A673 (cell line): ENCODE measurements at regions of chr6 and their contacts with region 1.

Region 1: GRCh38 chr6:154928325-154928922 is 66.7 kb upstream of the TIAM2 start:
- DNase-seq: peak; percentile 82
- H3K4me3 ChIP-seq: no peak overlapping the region
- H3K27ac ChIP-seq: no peak overlapping the region
- H3K4me1 ChIP-seq: peaks cover 29% of the 10 kb centered on the region
- H3K27me3 ChIP-seq: no peaks in the 10 kb centered on the region
- CTCF ChIP-seq: peak; percentile 87

Region 2: GRCh38 chr6:154675602-154676088 is 252.8 kb before region 1 on chr6:
- CTCF ChIA-PET with region 1: no interaction called
- POLR2A ChIA-PET with region 1: no interaction called
- intact Hi-C with region 1: loop called (anchors 5 kb)
- DNase-seq: peak; percentile 96
- H3K4me3 ChIP-seq: no peak overlapping the region
- H3K27ac ChIP-seq: no peak overlapping the region
- H3K4me1 ChIP-seq: no peaks in the 10 kb centered on the region
- H3K27me3 ChIP-seq: no peaks in the 10 kb centered on the region
- CTCF ChIP-seq: peak; percentile 100

Region 3: DNA sequence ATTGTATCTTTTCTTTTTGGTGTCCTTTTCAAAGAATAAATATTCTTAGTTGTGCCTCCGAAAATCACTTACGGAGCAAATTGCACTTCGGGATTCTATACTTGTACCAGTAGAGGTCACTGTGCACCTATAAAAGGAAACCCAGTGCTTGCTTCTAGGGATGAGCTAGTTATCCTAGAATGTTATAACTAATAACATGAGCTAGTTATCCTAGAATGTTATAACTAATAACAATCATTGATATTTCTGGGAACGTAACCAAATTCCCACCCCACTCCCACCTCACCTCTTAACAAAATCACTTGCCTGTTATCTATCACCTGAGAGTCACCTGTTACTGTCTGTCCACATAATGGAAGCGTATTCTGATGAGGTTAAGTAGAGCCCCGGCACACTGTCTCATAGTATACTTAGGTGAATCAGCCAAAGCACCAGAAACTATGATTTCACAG is 60.3 kb before region 1 on chr6:
- CTCF ChIA-PET with region 1: interaction called, 5 read pairs
- POLR2A ChIA-PET with region 1: no interaction called
- intact Hi-C with region 1: loop called (anchors 2 kb)
- DNase-seq: peak; percentile 77
- H3K4me3 ChIP-seq: no peak overlapping the region
- H3K27ac ChIP-seq: no peak overlapping the region
- H3K4me1 ChIP-seq: no peaks in the 10 kb centered on the region
- H3K27me3 ChIP-seq: no peaks in the 10 kb centered on the region
- CTCF ChIP-seq: peak; percentile 81

Region 4: DNA sequence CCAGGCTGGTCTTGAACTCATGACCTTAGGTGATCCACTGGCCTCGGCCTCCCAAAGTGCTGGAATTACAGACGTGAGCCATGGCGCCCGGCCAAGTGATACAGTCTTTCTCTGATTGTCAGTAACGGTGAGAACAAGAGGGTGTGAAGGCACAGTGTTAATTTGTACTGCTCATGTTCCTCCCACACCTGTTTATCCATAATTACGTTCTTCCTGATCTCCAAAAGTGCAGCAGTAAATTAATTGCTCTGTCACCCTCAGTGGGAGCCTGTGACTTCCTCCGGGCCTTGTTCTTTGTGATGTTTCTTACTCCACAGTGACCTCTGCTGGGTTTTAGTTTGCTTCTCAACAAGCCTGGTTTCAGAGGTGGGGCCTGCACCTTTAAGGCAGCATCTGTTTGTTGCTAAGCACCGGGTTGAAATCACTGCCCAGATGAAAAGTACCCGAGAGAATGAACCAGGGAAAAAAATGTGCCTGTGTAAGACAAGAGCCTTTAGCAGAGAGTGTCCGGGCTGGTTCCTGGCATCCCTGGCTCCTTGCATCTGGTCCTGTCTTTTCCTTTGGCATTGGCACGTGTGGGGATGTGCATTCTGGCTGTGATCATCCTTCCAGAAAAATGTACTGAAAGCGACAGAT is 246.3 kb after region 1 on chr6:
- CTCF ChIA-PET with region 1: interaction called, 4 read pairs
- POLR2A ChIA-PET with region 1: interaction called, 12 read pairs
- intact Hi-C with region 1: loop called (anchors 1 kb)
- DNase-seq: peak; percentile 90
- H3K4me3 ChIP-seq: no peak overlapping the region
- H3K27ac ChIP-seq: no peak overlapping the region
- H3K4me1 ChIP-seq: peaks cover 25% of the 10 kb centered on the region
- H3K27me3 ChIP-seq: no peaks in the 10 kb centered on the region
- CTCF ChIP-seq: peak; percentile 72

Region 5: DNA sequence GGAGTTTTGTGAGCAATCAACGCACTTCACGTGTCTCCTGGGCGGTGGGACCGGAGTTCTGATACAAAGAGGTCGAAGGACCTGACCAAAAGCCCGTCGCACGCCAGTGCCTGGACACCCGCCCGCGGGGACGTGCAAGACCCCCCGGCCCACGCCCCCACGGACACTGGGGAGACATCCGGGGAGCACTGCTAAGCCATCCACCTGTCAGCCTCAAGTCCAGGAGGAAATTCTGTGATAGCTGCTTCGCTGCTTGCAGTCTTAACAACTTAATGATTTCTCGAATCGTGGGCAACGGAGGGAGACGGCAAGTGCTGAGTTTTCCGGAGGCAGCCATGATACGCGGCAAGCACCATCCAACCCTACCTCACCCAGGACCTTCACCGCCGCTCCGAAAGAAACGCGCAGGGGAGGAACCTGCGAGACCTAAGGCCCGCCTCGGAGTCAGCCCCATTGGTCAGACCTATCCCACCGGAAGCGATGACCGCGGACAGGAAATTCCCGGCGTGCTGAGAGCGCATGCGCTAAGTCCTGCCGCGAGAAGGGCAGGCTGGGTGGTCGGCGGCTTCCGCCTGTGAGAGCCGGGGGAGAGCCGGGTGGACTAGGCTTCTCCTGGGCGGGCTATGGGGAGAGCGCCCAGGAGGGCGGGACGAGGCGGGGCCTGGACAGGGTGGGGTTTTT is 385.8 kb after region 1 on chr6 and contains the start of gene TFB1M:
- CTCF ChIA-PET with region 1: no interaction called
- POLR2A ChIA-PET with region 1: no interaction called
- intact Hi-C with region 1: loop called (anchors 5 kb)
- DNase-seq: peak; percentile 100
- H3K4me3 ChIP-seq: peak within 1 kb of the TSS; percentile 86
- H3K27ac ChIP-seq: peak within 1 kb of the TSS; percentile 77
- H3K4me1 ChIP-seq: peaks cover 29% of the 10 kb centered on the region
- H3K27me3 ChIP-seq: no peaks in the 10 kb centered on the region
- CTCF ChIP-seq: no peak
- total RNA-seq, gene TFB1M: 40.3 and 47.6 TPM in 2 replicates

Region 6: GRCh38 chr6:156662025-156662445 is 1733.6 kb after region 1 on chr6:
- CTCF ChIA-PET with region 1: no interaction called
- POLR2A ChIA-PET with region 1: no interaction called
- intact Hi-C with region 1: no loop called
- DNase-seq: no peak
- H3K4me3 ChIP-seq: no peak overlapping the region
- H3K27ac ChIP-seq: no peak overlapping the region
- H3K4me1 ChIP-seq: no peaks in the 10 kb centered on the region
- H3K27me3 ChIP-seq: no peaks in the 10 kb centered on the region
- CTCF ChIP-seq: peak; percentile 32